ENCODE measurements at regions of chr9 and their contacts with region 1.

Region 1: GRCh38 chr9:114906908-114907571 is 23.4 kb downstream of the TNFSF8 start:
- DNase-seq: no peak
- H3K4me3 ChIP-seq: no peak overlapping the region
- H3K27ac ChIP-seq: no peak overlapping the region
- H3K4me1 ChIP-seq: no peaks in the 10 kb centered on the region
- H3K27me3 ChIP-seq: no peaks in the 10 kb centered on the region
- CTCF ChIP-seq: peak; percentile 15 to 45 (median 21)
- EP300 ChIP-seq: no peak
- POLR2A ChIP-seq: no peak

Region 2: GRCh38 chr9:114405294-114406034 is 501.6 kb before region 1 on chr9:
- intact Hi-C with region 1: loop called (anchors 10 kb)
- DNase-seq: no peak
- H3K4me3 ChIP-seq: no peak overlapping the region
- H3K27ac ChIP-seq: no peak overlapping the region
- H3K4me1 ChIP-seq: peaks cover 0 to 6% (median 0%) of the 10 kb centered on the region in 4 donors
- H3K27me3 ChIP-seq: no peaks in the 10 kb centered on the region
- CTCF ChIP-seq: peak; percentile 70 to 85 (median 74)
- EP300 ChIP-seq: no peak
- POLR2A ChIP-seq: no peak

Region 3: DNA sequence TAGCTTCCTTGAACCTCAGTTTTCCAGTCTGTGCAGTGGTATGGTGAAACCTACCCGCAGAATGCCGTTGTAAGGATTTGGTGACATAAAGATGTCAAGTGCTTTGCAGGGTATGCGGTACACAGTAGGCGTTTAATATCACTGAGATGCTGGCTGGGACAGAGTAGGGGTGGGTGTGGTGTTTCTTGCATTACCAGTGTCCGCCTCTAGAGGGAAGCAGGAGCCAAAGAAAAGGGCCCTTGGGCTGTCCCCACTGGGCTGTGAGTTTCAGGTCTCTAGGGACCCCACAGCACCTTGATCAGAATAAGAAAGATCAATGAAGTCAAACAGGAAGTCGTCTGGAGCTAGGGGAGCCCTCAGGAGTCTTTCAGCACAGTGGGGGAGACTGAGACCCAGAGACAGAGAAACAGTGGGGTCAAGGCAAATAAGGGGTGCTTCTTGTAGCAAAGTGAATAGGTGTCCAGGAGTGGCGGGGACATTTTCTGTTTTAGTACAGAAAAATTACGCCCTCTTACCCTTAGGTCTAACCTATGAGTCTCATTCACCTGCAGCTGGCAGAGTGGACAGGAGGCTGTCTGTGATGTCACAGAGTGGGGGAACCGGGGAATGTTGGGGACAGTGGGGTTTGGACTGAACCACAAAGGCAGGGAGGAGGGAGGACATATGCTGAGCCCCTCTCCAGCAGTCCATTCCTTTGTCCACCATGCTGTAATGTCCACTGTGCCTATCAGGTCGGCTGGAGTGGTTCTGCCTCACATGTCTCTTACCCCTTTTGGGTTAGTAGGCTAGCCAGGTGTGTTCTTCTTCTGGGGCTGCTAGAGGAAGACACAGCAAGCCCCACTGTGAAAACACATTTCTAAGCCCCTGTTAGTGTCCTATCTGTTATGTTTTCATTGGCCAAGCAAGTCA is 244.7 kb before region 1 on chr9:
- intact Hi-C with region 1: loop called (anchors 10 kb)
- DNase-seq: no peak
- H3K4me3 ChIP-seq: no peak overlapping the region
- H3K27ac ChIP-seq: no peak overlapping the region
- H3K4me1 ChIP-seq: no peaks in the 10 kb centered on the region
- H3K27me3 ChIP-seq: no peaks in the 10 kb centered on the region
- CTCF ChIP-seq: peak; percentile 55 to 79 (median 64)
- EP300 ChIP-seq: no peak
- POLR2A ChIP-seq: no peak

Region 4: GRCh38 chr9:114681594-114682332 is 225.3 kb before region 1 on chr9 and contains the start of gene TEX48:
- intact Hi-C with region 1: loop called (anchors 10 kb)
- DNase-seq: no peak
- H3K4me3 ChIP-seq: no peak within 1 kb of the TSS
- H3K27ac ChIP-seq: no peak within 1 kb of the TSS
- H3K4me1 ChIP-seq: peaks cover 0 to 15% (median 7%) of the 10 kb centered on the region in 4 donors
- H3K27me3 ChIP-seq: no peaks in the 10 kb centered on the region
- CTCF ChIP-seq: peak; percentile 34 to 62 (median 47)
- EP300 ChIP-seq: no peak
- POLR2A ChIP-seq: no peak
- total RNA-seq, gene TEX48: not detected

Region 5: GRCh38 chr9:114738581-114739316 is 168.3 kb before region 1 on chr9:
- intact Hi-C with region 1: loop called (anchors 2 kb)
- DNase-seq: peak; percentile 95
- H3K4me3 ChIP-seq: no peak overlapping the region
- H3K27ac ChIP-seq: no peak overlapping the region
- H3K4me1 ChIP-seq: peaks cover 0 to 14% (median 9%) of the 10 kb centered on the region in 4 donors
- H3K27me3 ChIP-seq: no peaks in the 10 kb centered on the region
- CTCF ChIP-seq: peak; percentile 80 to 83 (median 82)
- EP300 ChIP-seq: no peak
- POLR2A ChIP-seq: no peak

Measured in esophagus muscularis mucosa (tissue), 4 donors.